PC-9 (cell line): ENCODE measurements at regions of chr4 and their contacts with region 1.

Region 1: GRCh38 chr4:141220655-141221605 is at the start of gene ZNF330:
- DNase-seq: peak; percentile 59 to 93
- H3K4me3 ChIP-seq: peak within 1 kb of the TSS; percentile 99
- H3K27ac ChIP-seq: peak within 1 kb of the TSS; percentile 70
- H3K4me1 ChIP-seq: 0 out of 2 replicates have a peak, but pooled peaks cover 5% of the 10 kb centered on the region
- H3K27me3 ChIP-seq: no peaks in the 10 kb centered on the region
- CTCF ChIP-seq: peak; percentile 32; the same call in 1 of the 2 replicates
- total RNA-seq, gene ZNF330: 22.5 and 38.4 TPM in 2 replicates

Region 2: GRCh38 chr4:140861359-140862176 is 359.4 kb before region 1 on chr4:
- CTCF ChIA-PET with region 1: no interaction called
- POLR2A ChIA-PET with region 1: no interaction called
- intact Hi-C with region 1: loop called (anchors 5 kb)
- DNase-seq: peak; percentile 48 to 51
- H3K4me3 ChIP-seq: no peak overlapping the region
- H3K27ac ChIP-seq: no peak overlapping the region
- H3K4me1 ChIP-seq: peaks cover 13% of the 10 kb centered on the region
- H3K27me3 ChIP-seq: no peaks in the 10 kb centered on the region
- CTCF ChIP-seq: peak; percentile 79

Region 3: DNA sequence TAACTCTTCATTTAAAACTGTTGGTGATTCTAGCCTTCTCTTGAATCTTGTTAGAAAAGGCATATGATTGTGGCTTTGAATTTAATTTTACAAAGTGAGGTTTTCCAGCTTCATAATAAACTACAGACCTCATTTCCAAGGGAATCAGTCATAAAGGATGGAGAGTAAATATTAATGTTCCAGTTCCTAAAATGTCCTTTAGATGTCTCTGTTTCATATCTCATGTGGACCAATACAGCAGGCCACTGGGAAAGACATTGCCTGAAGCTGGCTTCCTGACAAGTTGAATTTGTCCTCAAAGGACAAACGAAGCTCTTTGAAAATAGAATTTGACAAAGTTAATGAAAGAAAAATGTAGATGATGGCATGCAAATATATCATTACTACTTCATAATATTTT is 125.2 kb after region 1 on chr4:
- CTCF ChIA-PET with region 1: no interaction called
- POLR2A ChIA-PET with region 1: no interaction called
- intact Hi-C with region 1: no loop called
- DNase-seq: no peak
- H3K4me3 ChIP-seq: no peak overlapping the region
- H3K27ac ChIP-seq: no peak overlapping the region
- H3K4me1 ChIP-seq: peaks cover 9% of the 10 kb centered on the region
- H3K27me3 ChIP-seq: no peaks in the 10 kb centered on the region
- CTCF ChIP-seq: peak; percentile 62

Region 4: GRCh38 chr4:141654098-141654497 is 433.2 kb after region 1 on chr4:
- CTCF ChIA-PET with region 1: no interaction called
- POLR2A ChIA-PET with region 1: no interaction called
- intact Hi-C with region 1: no loop called
- DNase-seq: peak in 1 of 2 experiments; percentile 4
- H3K4me3 ChIP-seq: no peak overlapping the region
- H3K27ac ChIP-seq: no peak overlapping the region
- H3K4me1 ChIP-seq: no peaks in the 10 kb centered on the region
- H3K27me3 ChIP-seq: no peaks in the 10 kb centered on the region
- CTCF ChIP-seq: peak; percentile 27; the same call in 1 of the 2 replicates